Esophagus muscularis mucosa (tissue), 4 donors: ENCODE measurements at regions of chr5 and their contacts with region 1.

Region 1: GRCh38 chr5:142931896-142932686 is 161.9 kb downstream of the ARHGAP26 start:
- DNase-seq: no peak
- H3K4me3 ChIP-seq: no peak overlapping the region
- H3K27ac ChIP-seq: no peak overlapping the region
- H3K4me1 ChIP-seq: peaks cover 13 to 58% (median 29%) of the 10 kb centered on the region in 4 donors
- H3K27me3 ChIP-seq: no peaks in the 10 kb centered on the region
- CTCF ChIP-seq: no peak
- EP300 ChIP-seq: no peak
- POLR2A ChIP-seq: no peak

Region 2: DNA sequence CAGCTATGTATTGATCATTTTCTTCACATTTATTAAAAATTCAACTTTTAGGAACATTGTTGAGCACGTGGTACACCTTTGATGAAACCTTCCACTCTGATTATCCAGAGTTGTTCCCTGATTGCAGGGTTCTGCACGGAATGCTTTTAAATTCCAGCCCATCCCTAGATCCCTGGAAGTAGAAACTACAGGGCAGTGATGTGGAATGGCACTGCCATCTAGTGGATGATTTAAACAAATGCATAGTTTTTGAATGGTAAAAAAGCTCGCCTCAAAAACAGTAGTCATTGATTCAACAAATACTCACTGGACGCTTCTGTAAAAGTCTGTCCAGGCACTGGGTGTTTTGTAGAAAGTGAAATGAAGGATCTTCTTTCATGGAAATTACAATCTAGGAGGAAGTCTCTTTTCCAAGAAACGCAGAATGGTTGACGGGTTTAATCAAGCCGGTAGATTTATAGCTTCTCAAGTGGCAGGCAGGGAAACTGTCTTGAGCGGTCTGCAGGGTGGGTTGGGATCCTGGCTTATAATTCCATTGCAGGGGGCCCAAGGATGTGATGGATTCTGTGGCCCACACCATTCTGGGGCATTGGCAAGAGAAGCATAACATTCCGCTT is 43.5 kb before region 1 on chr5:
- intact Hi-C with region 1: no loop called
- DNase-seq: no peak
- H3K4me3 ChIP-seq: no peak overlapping the region
- H3K27ac ChIP-seq: no peak overlapping the region
- H3K4me1 ChIP-seq: peaks cover 9 to 24% (median 12%) of the 10 kb centered on the region in 4 donors
- H3K27me3 ChIP-seq: no peaks in the 10 kb centered on the region
- CTCF ChIP-seq: peak; percentile 75 to 82 (median 76)
- EP300 ChIP-seq: no peak
- POLR2A ChIP-seq: no peak

Region 3: DNA sequence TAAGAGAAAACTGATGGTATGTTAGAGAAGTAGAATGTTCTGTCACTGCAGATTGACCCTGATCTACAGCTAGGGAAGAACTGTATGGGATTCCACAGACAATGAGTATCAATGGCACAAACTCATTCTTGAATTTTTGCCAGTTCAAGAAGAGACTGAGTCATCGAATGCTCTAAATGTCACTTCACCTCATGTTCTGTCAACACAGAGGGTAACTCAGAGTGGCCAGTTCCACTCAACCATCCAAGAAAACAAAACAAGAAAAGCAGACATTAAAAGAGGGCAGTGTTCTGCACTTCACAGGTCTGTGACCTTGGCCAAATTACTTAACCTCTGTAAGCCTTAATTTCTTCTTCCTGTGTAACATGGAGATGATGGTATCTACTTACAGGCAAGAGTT is 747.7 kb after region 1 on chr5:
- intact Hi-C with region 1: no loop called
- DNase-seq: no peak
- H3K4me3 ChIP-seq: no peak overlapping the region
- H3K27ac ChIP-seq: no peak overlapping the region
- H3K4me1 ChIP-seq: peaks cover 19 to 26% (median 22%) of the 10 kb centered on the region in 4 donors
- H3K27me3 ChIP-seq: no peaks in the 10 kb centered on the region
- CTCF ChIP-seq: no peak
- EP300 ChIP-seq: no peak
- POLR2A ChIP-seq: no peak

Region 4: GRCh38 chr5:143819716-143820115 is 887.6 kb after region 1 on chr5:
- intact Hi-C with region 1: loop called (anchors 5 kb)
- DNase-seq: no peak
- H3K4me3 ChIP-seq: no peak overlapping the region
- H3K27ac ChIP-seq: no peak overlapping the region
- H3K4me1 ChIP-seq: peaks cover 0 to 2% (median under 1%) of the 10 kb centered on the region in 4 donors
- H3K27me3 ChIP-seq: no peaks in the 10 kb centered on the region
- CTCF ChIP-seq: no peak
- EP300 ChIP-seq: no peak
- POLR2A ChIP-seq: no peak